Mammary epithelial cell (primary cell): ENCODE measurements at regions of chr5 and their contacts with region 1.

Region 1: DNA sequence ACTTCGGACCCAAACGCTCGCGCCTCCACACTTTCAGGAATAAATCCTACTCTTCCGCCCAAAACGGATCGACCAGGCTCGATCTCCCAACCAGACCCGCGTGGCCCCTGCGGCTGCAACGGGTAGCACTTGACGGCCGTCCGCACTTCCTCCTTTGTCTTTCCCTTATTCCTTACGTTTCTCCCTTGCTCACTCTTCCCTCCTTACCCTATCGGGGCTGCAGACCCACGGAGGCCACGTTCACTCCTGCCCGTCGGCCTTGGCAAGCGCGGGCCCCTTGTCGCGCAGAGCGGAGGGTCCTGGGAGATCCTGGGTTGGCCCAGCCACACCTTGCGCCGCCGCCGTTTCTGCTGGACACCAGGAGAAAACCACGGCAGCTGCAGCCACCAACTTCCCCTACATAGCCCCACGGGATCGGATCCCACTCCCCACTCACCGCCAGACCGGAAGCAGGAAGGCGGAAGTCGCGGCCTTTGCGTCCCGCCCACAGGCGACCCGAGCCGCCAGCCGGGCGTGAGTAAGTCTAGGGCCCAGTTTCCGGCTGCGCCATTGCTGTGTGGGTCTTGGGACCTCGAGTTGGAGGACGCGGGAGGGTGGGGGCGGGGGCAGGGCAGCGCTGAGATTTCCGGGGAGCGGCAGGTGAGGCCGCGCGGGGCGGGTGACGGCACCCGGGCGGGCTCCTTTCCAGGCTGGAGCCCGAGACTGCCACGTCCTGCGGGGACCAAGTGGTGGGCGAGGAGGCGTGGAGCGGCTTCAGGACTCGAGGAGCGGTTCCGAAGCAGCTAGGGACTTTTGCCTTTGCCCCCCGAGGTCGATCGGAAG is at the start of gene SMIM15:
- DNase-seq: peak; percentile 86
- H3K4me3 ChIP-seq: peak within 1 kb of the TSS; percentile 95 to 97 (median 96)
- H3K27ac ChIP-seq: peak within 1 kb of the TSS; percentile 94
- H3K4me1 ChIP-seq: peaks cover 12% of the 10 kb centered on the region
- H3K27me3 ChIP-seq: no peaks in the 10 kb centered on the region
- CTCF ChIP-seq: peak in 1 of 2 donors; percentile 0
- total RNA-seq, gene SMIM15: 36.7 to 75.0 TPM

Region 2: DNA sequence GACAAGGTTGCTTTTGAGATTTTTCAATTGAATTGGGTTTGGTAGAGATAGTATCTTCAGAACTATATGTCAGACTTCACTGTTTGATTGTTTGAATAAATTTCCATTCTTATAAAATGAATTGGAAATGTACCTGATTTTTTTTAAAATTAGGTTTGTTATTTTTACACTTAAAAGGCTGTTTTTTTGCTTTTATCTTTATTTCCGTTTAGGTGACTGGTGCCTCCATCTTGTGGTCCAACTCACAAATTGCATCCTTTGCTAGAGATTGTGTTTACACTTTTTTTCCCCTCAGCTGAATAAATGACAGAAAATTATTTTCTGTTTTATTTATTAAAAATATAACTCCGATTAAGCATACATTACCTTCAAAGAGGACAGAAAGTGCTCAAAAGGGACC is 201.6 kb before region 1 on chr5:
- CTCF ChIA-PET with region 1: no interaction called
- dilution Hi-C with region 1: no loop called
- in situ Hi-C with region 1: no loop called
- intact Hi-C with region 1: loop called (anchors 10 kb)
- DNase-seq: no peak
- H3K4me3 ChIP-seq: no peak overlapping the region
- H3K27ac ChIP-seq: no peak overlapping the region
- H3K4me1 ChIP-seq: no peaks in the 10 kb centered on the region
- H3K27me3 ChIP-seq: no peaks in the 10 kb centered on the region
- CTCF ChIP-seq: peak; percentile 51 to 56

Region 3: DNA sequence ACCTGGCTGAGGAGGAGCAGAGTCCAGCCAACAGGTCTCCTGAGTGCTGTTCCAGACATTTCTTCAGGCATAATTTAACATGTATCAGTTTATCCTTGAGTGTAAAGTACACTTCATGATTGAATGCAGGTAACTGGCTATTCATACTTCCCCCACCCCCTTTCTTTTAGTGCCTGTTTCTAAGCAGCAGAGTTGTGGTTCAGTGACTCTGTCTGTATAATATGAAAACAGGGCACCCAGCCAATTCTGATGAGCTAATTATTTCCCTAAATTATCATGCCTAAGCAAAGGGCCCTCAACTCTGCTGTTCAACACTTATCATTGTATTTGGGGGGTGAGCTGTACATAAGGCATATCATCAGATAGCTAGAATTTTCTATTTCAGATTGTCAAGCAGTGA is 118.0 kb after region 1 on chr5:
- CTCF ChIA-PET with region 1: no interaction called
- dilution Hi-C with region 1: no loop called
- in situ Hi-C with region 1: no loop called
- intact Hi-C with region 1: no loop called
- DNase-seq: peak; percentile 89
- H3K4me3 ChIP-seq: no peak overlapping the region
- H3K27ac ChIP-seq: peak overlapping the region; percentile 52
- H3K4me1 ChIP-seq: peaks cover 34% of the 10 kb centered on the region
- H3K27me3 ChIP-seq: no peaks in the 10 kb centered on the region
- CTCF ChIP-seq: no peak

Region 4: DNA sequence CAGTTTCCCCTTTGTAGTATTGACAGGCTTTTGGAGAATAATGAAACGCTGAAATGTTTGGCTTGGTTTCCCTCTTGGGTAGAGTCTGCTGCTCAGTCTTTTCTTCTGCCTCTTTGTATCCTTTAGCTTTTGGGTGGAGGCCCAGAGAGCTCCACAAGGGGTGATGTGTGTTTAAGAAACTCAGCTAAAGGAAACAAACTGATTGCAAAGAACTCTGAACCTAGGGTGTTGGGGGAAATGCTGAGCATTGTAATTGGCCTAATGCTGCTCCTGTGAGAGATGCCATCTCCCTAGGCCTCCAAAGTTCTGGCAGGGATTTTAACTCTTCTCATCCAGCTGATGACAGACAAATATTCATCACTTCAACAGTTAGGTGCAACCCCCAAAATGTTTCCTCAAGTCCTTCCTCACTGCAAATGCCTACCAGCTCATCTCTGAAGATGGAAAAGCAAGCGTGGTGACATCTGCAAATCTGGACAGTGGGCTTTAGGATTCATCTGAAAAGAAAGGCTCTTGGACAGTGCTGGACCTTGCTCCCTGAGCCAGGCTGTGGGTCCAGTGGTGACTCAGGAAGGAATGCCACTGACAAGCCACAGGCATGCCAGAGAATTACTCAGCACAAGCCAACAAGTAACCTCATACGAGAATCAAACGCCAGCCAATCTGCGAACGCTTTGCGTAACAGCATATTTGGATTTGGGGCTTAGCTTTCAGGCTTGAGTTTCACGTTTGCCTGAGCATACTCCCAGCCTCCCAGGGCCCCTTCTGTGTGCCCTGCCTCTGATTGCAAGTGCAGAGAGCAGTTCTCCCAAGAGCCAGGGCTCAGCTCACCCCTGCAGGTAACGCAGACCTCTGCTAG is 139.3 kb after region 1 on chr5:
- CTCF ChIA-PET with region 1: no interaction called
- dilution Hi-C with region 1: no loop called
- in situ Hi-C with region 1: loop called in 1 of 2 experiments (anchors 10 kb)
- intact Hi-C with region 1: no loop called
- DNase-seq: peak; percentile 97
- H3K4me3 ChIP-seq: no peak overlapping the region
- H3K27ac ChIP-seq: peak overlapping the region; percentile 78
- H3K4me1 ChIP-seq: peaks cover 72% of the 10 kb centered on the region
- H3K27me3 ChIP-seq: no peaks in the 10 kb centered on the region
- CTCF ChIP-seq: no peak

Region 5: GRCh38 chr5:61408476-61409168 is 246.4 kb after region 1 on chr5:
- CTCF ChIA-PET with region 1: no interaction called
- dilution Hi-C with region 1: no loop called
- in situ Hi-C with region 1: no loop called
- intact Hi-C with region 1: loop called (anchors 10 kb)
- DNase-seq: peak; percentile 100
- H3K4me3 ChIP-seq: peak overlapping the region; percentile 2 to 54 (median 35)
- H3K27ac ChIP-seq: peak overlapping the region; percentile 100
- H3K4me1 ChIP-seq: peaks cover 21% of the 10 kb centered on the region
- H3K27me3 ChIP-seq: no peaks in the 10 kb centered on the region
- CTCF ChIP-seq: no peak

Region 6: GRCh38 chr5:61805101-61805500 is 642.9 kb after region 1 on chr5:
- CTCF ChIA-PET with region 1: no interaction called
- dilution Hi-C with region 1: no loop called
- in situ Hi-C with region 1: no loop called
- intact Hi-C with region 1: loop called (anchors 5 kb)
- DNase-seq: peak; percentile 86
- H3K4me3 ChIP-seq: no peak overlapping the region
- H3K27ac ChIP-seq: peak overlapping the region; percentile 58
- H3K4me1 ChIP-seq: peaks cover 36% of the 10 kb centered on the region
- H3K27me3 ChIP-seq: no peaks in the 10 kb centered on the region
- CTCF ChIP-seq: no peak